B cell (primary cell): ENCODE measurements at regions of chr1 and their contacts with region 1.

Region 1: GRCh38 chr1:9101510-9102146 is 27.3 kb downstream of the GPR157 start:
- DNase-seq: peak; percentile 72
- ATAC-seq: peak; percentile 93
- H3K4me3 ChIP-seq: no peak overlapping the region
- H3K4me3 Mint-ChIP-seq: no peak overlapping the region
- H3K27ac ChIP-seq: no peak overlapping the region
- H3K27ac Mint-ChIP-seq: no peak overlapping the region
- H3K4me1 ChIP-seq: no peaks in the 10 kb centered on the region
- H3K4me1 Mint-ChIP-seq: no peaks in the 10 kb centered on the region
- H3K27me3 ChIP-seq: no peaks in the 10 kb centered on the region
- H3K27me3 Mint-ChIP-seq: no peaks in the 10 kb centered on the region
- CTCF ChIP-seq: peak; percentile 78

Region 2: GRCh38 chr1:7930645-7931445 is 1170.8 kb before region 1 on chr1:
- CTCF ChIA-PET with region 1: no interaction called
- POLR2A ChIA-PET with region 1: no interaction called
- intact Hi-C with region 1: no loop called
- DNase-seq: peak; percentile 27
- ATAC-seq: no peak
- H3K4me3 ChIP-seq: peak overlapping the region in 1 of 5 experiments; percentile 19
- H3K4me3 Mint-ChIP-seq: no peak overlapping the region
- H3K27ac ChIP-seq: peak overlapping the region in 1 of 2 donors; percentile 65
- H3K27ac Mint-ChIP-seq: no peak overlapping the region
- H3K4me1 ChIP-seq: peaks cover 12 to 16% of the 10 kb centered on the region in 2 donors
- H3K4me1 Mint-ChIP-seq: peaks cover 7% of the 10 kb centered on the region
- H3K27me3 ChIP-seq: peaks cover 0 to 10% (median 0%) of the 10 kb centered on the region in 4 experiments
- H3K27me3 Mint-ChIP-seq: peaks cover 23% of the 10 kb centered on the region
- CTCF ChIP-seq: no peak

Region 3: DNA sequence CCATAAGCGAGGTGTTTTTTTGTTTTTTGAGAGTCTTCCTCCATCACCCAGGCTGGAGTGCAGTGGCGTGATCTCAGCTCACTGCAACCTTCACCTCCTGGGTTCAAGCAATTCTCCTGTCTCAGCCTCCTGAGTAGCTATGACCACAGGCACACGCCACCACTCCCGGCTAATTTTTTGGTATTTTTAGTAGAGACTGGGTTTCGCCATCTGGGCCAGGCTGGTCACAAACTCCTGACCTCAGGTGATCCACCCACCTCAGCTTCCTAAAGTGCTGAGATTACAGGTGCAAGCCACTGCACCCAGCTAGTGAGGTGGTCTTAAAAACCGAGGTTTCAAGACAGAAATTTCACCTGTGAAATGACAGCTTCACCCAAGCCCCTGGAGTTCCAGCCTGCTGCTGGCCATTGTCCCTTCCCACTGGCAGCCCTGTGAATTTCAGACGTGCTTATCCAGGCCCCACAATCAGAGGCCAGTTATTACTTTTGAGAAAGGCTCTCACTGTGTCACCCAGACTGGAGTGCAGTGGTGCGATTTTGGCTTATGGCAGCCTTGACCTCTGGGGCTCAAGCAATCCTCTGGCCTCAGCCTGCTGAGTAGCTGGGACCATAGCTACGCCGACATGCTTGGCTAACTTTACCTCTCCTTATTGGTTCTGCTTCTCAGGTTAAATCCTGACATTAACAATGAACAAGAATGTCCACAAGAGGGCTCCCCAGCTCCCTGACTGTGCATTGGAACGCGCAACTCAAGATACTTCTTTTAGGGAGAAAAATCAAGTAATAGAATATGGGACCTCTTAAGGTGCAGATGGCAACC is 242.5 kb before region 1 on chr1:
- CTCF ChIA-PET with region 1: interaction called, 8 read pairs
- POLR2A ChIA-PET with region 1: no interaction called
- intact Hi-C with region 1: loop called (anchors 1 kb)
- DNase-seq: peak; percentile 73
- ATAC-seq: peak; percentile 83
- H3K4me3 ChIP-seq: no peak overlapping the region
- H3K4me3 Mint-ChIP-seq: no peak overlapping the region
- H3K27ac ChIP-seq: no peak overlapping the region
- H3K27ac Mint-ChIP-seq: peak overlapping the region; percentile 18
- H3K4me1 ChIP-seq: peaks cover 7 to 8% of the 10 kb centered on the region in 2 donors
- H3K4me1 Mint-ChIP-seq: peaks cover 18% of the 10 kb centered on the region
- H3K27me3 ChIP-seq: no peaks in the 10 kb centered on the region
- H3K27me3 Mint-ChIP-seq: no peaks in the 10 kb centered on the region
- CTCF ChIP-seq: peak; percentile 77

Region 4: GRCh38 chr1:8937701-8938100 is 163.9 kb before region 1 on chr1:
- CTCF ChIA-PET with region 1: no interaction called
- POLR2A ChIA-PET with region 1: no interaction called
- intact Hi-C with region 1: no loop called
- DNase-seq: no peak
- ATAC-seq: no peak
- H3K4me3 ChIP-seq: no peak overlapping the region
- H3K4me3 Mint-ChIP-seq: no peak overlapping the region
- H3K27ac ChIP-seq: no peak overlapping the region
- H3K27ac Mint-ChIP-seq: no peak overlapping the region
- H3K4me1 ChIP-seq: no peaks in the 10 kb centered on the region
- H3K4me1 Mint-ChIP-seq: no peaks in the 10 kb centered on the region
- H3K27me3 ChIP-seq: no peaks in the 10 kb centered on the region
- H3K27me3 Mint-ChIP-seq: peaks cover 23% of the 10 kb centered on the region
- CTCF ChIP-seq: no peak

Region 5: DNA sequence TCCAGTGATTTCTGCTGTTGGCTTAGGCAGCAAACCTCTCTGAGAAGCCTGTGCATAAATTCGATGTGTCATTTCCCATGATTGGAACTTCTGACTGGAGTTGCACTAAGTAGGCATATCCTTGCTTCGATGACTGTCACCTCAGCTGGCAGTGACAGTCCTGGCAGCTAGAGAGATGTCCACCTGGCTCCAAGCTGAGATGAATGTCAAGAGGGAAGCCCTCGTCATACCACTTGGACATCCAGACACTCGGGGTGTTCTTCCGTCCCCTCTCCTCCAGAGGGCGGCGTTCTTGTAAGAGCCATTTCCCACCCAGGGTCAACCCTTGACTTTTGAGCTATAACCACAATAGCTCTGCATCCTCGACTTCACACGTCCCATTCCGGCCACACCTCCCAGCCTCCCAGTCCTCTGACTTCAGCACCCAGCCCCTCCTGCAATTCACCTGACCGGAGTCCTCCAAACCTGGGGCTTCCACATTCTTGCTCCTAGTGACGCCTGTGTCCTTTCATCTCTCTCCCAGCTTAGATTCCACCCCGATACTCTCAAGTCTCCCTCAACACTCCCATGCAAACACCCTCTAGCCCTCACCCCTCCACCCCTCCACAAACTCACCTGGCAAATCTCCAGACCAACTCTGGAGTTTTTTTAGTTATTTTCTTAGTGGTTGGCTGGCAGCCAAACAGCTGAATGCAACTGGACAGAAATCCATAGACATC is 138.7 kb before region 1 on chr1:
- CTCF ChIA-PET with region 1: interaction called, 19 read pairs
- POLR2A ChIA-PET with region 1: interaction called, 3 read pairs
- intact Hi-C with region 1: loop called (anchors 1 kb)
- DNase-seq: peak; percentile 43
- ATAC-seq: peak; percentile 36
- H3K4me3 ChIP-seq: no peak overlapping the region
- H3K4me3 Mint-ChIP-seq: no peak overlapping the region
- H3K27ac ChIP-seq: no peak overlapping the region
- H3K27ac Mint-ChIP-seq: no peak overlapping the region
- H3K4me1 ChIP-seq: no peaks in the 10 kb centered on the region
- H3K4me1 Mint-ChIP-seq: no peaks in the 10 kb centered on the region
- H3K27me3 ChIP-seq: peaks cover 0 to 3% (median 0%) of the 10 kb centered on the region in 4 experiments
- H3K27me3 Mint-ChIP-seq: peaks cover 12% of the 10 kb centered on the region
- CTCF ChIP-seq: peak; percentile 45

Region 6: DNA sequence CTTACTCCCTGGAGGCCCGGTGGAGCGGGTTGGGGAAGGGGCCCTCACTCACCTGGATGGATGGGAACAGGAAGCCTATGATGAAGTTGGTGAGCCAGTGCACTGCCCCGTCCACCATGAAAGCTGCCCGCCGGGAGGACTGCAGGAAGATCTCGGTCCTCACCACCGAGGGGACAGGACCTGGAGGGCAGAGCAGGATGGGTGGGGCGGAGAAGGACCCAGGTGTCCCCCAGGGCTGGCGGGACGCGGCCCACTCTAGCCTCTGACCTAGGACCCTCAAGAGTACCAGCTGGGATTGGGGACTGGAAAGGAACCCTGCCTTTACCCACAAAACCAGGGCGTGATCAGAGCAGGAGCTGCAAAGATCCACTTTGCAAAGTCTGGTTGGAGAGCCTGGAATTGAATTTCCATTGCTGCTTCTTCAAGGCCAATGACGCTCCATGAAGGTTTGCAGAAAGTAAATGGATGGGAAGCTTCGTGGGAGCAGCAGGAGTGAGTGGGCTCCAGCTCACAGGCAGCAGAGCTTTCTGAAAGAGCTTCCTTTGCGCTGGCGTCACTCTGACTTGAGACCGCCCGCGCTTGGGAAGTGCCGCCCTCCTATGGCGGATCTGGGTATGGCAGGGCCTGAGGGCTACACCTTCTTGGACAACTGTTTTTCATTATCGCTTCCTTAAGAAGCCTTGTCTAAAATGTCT is 96.8 kb before region 1 on chr1:
- CTCF ChIA-PET with region 1: interaction called, 95 read pairs
- POLR2A ChIA-PET with region 1: no interaction called
- intact Hi-C with region 1: loop called (anchors 1 kb)
- DNase-seq: peak; percentile 83
- ATAC-seq: peak; percentile 79
- H3K4me3 ChIP-seq: no peak overlapping the region
- H3K4me3 Mint-ChIP-seq: no peak overlapping the region
- H3K27ac ChIP-seq: no peak overlapping the region
- H3K27ac Mint-ChIP-seq: peak overlapping the region; percentile 3
- H3K4me1 ChIP-seq: peaks cover 11 to 26% of the 10 kb centered on the region in 2 donors
- H3K4me1 Mint-ChIP-seq: peaks cover 33% of the 10 kb centered on the region
- H3K27me3 ChIP-seq: peaks cover 0 to 11% (median 2%) of the 10 kb centered on the region in 4 experiments
- H3K27me3 Mint-ChIP-seq: peaks cover 16% of the 10 kb centered on the region
- CTCF ChIP-seq: peak; percentile 91

Region 7: GRCh38 chr1:9022773-9023172 is 78.9 kb before region 1 on chr1:
- CTCF ChIA-PET with region 1: interaction called, 10 read pairs
- POLR2A ChIA-PET with region 1: no interaction called
- intact Hi-C with region 1: no loop called
- DNase-seq: no peak
- ATAC-seq: no peak
- H3K4me3 ChIP-seq: no peak overlapping the region
- H3K4me3 Mint-ChIP-seq: no peak overlapping the region
- H3K27ac ChIP-seq: no peak overlapping the region
- H3K27ac Mint-ChIP-seq: no peak overlapping the region
- H3K4me1 ChIP-seq: no peaks in the 10 kb centered on the region
- H3K4me1 Mint-ChIP-seq: peaks cover 6% of the 10 kb centered on the region
- H3K27me3 ChIP-seq: peaks cover 0 to 5% (median 0%) of the 10 kb centered on the region in 4 experiments
- H3K27me3 Mint-ChIP-seq: peaks cover 5% of the 10 kb centered on the region
- CTCF ChIP-seq: no peak

Region 8: DNA sequence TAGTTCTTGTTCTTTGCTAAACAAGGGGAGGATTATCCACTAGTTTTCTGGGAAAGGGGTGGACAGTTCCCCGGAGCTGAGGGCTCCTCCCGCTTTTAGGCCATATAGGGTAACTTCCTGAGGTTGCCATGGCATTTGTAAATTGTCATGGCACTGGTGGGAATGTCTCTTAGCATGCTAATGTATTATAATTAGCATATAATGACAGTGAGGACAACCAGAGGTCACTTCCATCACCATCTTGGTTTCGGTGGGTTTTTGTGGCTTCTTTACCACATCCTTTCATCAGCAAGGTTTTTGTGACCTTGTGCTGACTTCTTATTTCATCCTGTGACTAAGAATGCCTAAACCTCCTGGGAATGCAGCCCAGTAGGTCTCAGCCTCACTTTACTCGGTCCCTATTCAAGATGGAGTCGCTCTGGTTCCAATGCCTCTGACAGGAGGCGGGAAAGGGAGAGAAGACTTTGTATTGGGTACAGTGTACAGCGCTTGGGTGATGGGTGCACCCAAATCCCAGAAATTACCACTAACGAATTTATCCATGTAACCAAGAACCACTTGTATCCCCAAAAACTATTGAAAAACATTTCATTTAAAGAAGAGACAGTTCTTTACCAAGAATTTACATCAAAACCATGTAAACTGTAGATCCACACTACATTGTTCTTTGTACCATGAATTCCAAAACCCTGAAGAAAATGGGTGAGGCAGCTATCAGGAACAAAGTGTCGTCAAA is 23.4 kb before region 1 on chr1:
- CTCF ChIA-PET with region 1: interaction called, 18 read pairs
- POLR2A ChIA-PET with region 1: no interaction called
- intact Hi-C with region 1: no loop called
- DNase-seq: no peak
- ATAC-seq: peak; percentile 4
- H3K4me3 ChIP-seq: peak overlapping the region in 1 of 5 experiments; percentile 8
- H3K4me3 Mint-ChIP-seq: peak overlapping the region; percentile 70
- H3K27ac ChIP-seq: no peak overlapping the region
- H3K27ac Mint-ChIP-seq: peak overlapping the region; percentile 26
- H3K4me1 ChIP-seq: peaks cover 85 to 94% of the 10 kb centered on the region in 2 donors
- H3K4me1 Mint-ChIP-seq: peaks cover 80% of the 10 kb centered on the region
- H3K27me3 ChIP-seq: peaks cover 0 to 6% (median 3%) of the 10 kb centered on the region in 4 experiments
- H3K27me3 Mint-ChIP-seq: peaks cover 14% of the 10 kb centered on the region
- CTCF ChIP-seq: no peak